Caco-2 (cell line): ENCODE measurements at regions of chr14 and their contacts with region 1.

Region 1: GRCh38 chr14:45177076-45177475 is 41.3 kb downstream of the FANCM start:
- DNase-seq: no peak
- H3K4me3 ChIP-seq: no peak overlapping the region
- H3K4me3 Mint-ChIP-seq: no peak overlapping the region
- H3K27ac Mint-ChIP-seq: no peak overlapping the region
- H3K4me1 ChIP-seq: no peaks in the 10 kb centered on the region
- H3K4me1 Mint-ChIP-seq: no peaks in the 10 kb centered on the region
- H3K27me3 ChIP-seq: no peaks in the 10 kb centered on the region
- H3K27me3 Mint-ChIP-seq: no peaks in the 10 kb centered on the region
- CTCF ChIP-seq: no peak

Region 2: DNA sequence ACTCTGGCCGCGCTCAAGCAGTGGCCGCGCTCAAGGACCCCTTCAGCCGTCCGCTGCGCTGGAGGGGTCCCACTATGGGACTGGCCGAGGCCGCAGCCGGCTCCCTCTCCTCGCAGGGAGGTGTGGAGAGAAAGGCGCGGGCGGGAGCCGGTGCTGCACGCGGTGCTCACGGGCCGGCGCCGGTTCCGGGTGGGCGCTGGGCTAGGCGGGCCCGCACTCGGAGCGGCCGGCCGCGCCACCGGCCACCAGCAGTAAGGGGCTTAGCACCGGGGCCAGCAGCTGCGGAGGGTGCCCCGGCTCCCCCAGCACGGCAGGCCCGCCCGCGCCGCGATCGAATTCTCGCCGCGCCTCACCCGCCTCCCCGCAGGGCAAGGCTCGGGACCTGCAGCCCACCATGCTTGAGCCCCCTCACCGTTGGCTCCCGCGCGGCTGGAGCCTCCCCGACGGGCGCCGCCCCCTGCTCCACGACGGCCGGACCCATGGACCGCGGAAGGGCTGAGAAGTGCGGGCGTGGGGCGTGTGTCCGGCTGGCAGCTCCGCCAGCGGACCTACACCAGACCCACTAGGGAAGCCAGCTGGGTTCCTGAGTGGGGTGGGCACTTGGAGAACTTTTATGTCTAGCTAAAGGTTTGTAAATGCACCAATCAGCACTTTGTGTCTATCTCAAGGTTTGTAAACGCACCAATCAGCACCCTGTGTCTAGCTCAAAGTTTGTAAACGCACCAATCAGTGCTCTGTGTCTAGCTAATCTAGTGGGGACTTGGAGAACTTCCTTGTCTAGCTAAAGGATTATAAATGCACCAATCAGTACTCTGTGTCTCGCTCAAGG is 264.8 kb before region 1 on chr14:
- CTCF ChIA-PET with region 1: no interaction called
- POLR2A ChIA-PET with region 1: no interaction called
- intact Hi-C with region 1: no loop called
- DNase-seq: no peak
- H3K4me3 ChIP-seq: no peak overlapping the region
- H3K4me3 Mint-ChIP-seq: no peak overlapping the region
- H3K27ac Mint-ChIP-seq: no peak overlapping the region
- H3K4me1 ChIP-seq: no peaks in the 10 kb centered on the region
- H3K4me1 Mint-ChIP-seq: no peaks in the 10 kb centered on the region
- H3K27me3 ChIP-seq: no peaks in the 10 kb centered on the region
- H3K27me3 Mint-ChIP-seq: no peaks in the 10 kb centered on the region
- CTCF ChIP-seq: no peak

Region 3: DNA sequence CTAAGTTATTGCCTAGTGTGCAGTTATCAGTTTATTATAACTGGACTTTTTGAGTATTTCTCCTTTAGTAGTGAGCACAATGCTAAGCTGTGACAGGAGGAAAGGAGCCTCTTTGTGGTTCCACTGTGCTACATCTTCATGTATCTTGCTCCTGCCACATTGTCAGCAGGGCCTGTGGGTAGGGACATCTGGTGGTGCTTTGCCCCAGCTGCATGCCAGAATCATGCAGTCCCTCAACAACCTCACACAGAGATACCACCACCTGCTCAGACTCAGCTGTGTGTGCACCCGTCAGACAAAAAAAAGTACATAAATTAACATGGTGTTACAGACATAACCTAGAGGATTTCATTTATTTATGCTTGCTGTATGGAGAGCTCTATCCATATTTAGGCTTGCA is 24.8 kb after region 1 on chr14:
- CTCF ChIA-PET with region 1: no interaction called
- POLR2A ChIA-PET with region 1: no interaction called
- intact Hi-C with region 1: loop called (anchors 1 kb)
- DNase-seq: peak in 1 of 2 experiments; percentile 34
- H3K4me3 ChIP-seq: no peak overlapping the region
- H3K4me3 Mint-ChIP-seq: no peak overlapping the region
- H3K27ac Mint-ChIP-seq: no peak overlapping the region
- H3K4me1 ChIP-seq: no peaks in the 10 kb centered on the region
- H3K4me1 Mint-ChIP-seq: no peaks in the 10 kb centered on the region
- H3K27me3 ChIP-seq: no peaks in the 10 kb centered on the region
- H3K27me3 Mint-ChIP-seq: no peaks in the 10 kb centered on the region
- CTCF ChIP-seq: peak; percentile 16 to 59

Region 4: DNA sequence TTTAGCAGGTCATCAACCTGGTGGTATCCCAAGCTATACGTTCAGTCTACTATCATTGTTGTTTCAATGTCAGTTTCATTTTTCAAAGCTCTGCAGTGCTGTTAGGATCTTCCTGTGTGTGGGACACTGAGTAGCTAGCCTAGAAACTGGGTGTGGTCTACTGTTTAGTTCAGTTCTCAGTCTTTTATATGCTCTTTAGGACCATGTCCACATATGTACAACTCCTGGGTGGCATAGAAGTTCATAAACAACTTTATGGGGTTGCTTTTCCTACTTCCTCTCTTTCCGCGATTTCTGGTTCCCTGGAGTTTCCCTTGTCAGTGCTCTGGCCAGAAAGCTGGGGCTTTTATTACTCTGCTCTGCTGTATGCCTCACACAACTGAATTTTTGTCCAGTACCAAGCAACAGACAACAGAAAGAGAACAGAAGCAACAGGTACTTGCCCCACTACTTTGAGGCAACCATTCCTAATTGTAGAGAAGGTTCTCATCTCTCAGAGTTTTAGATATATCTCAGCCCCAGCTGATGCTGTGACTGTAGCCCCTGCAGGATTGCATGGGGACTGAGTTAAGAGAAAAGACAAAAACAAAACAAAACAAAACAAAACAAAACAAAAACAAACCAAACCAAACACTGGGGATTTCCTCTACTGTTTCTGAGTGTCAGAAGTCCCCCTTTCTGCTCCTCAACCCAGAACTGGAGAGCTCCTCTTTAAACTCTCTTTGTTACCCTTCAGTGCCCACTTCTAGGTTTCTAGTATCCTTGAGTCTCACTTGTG is 45.6 kb after region 1 on chr14:
- CTCF ChIA-PET with region 1: no interaction called
- POLR2A ChIA-PET with region 1: no interaction called
- intact Hi-C with region 1: no loop called
- DNase-seq: no peak
- H3K4me3 ChIP-seq: no peak overlapping the region
- H3K4me3 Mint-ChIP-seq: no peak overlapping the region
- H3K27ac Mint-ChIP-seq: no peak overlapping the region
- H3K4me1 ChIP-seq: no peaks in the 10 kb centered on the region
- H3K4me1 Mint-ChIP-seq: no peaks in the 10 kb centered on the region
- H3K27me3 ChIP-seq: no peaks in the 10 kb centered on the region
- H3K27me3 Mint-ChIP-seq: no peaks in the 10 kb centered on the region
- CTCF ChIP-seq: no peak